PC-9 (cell line): ENCODE measurements at regions of chr14 and their contacts with region 1.

Region 1: DNA sequence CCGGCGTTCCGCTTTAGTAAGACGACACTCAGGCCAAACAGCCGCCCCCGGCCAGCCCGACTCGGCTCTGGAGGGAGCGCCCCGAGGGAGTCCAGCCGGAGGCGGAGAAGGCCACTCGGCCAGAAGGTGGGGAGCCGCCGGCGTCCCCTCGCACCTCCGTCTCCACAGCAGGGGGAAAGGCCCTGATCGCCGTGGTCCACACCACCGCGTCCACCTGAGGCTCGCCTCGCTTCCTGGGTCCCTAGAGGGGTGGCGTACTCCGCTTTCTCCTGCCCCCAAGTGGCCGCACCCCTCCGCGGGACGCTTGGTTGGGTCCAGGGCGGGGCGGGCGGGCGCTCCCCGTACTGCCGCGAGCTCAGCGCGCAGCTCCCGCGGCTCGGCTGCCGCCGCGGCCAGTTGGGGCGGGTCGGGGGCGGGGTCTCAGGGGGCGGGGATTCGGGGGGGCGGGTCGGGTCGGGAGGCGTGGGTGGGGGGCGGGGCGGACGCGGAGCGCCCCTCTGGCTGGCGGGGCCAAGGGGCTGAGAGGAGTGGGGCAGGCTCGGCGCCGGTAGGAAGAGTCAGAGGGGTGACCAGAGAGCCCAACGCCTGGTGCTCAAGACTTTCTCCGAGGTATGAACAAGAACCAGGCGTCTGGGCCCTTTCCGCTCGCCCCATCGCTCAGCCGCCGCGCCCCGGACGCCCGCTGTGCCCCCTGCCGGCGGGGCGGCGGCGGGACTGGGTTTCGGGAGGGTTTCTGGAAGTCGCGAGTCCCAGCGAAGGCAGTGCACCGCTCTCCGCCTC is at the start of gene FRMD6:
- DNase-seq: peak; percentile 70 to 86
- H3K4me3 ChIP-seq: peak within 1 kb of the TSS; percentile 98
- H3K27ac ChIP-seq: peak within 1 kb of the TSS; percentile 88
- H3K4me1 ChIP-seq: peaks cover 51% of the 10 kb centered on the region
- H3K27me3 ChIP-seq: no peaks in the 10 kb centered on the region
- CTCF ChIP-seq: peak; percentile 79
- total RNA-seq, gene FRMD6: 42.9 and 47.9 TPM in 2 replicates

Region 2: DNA sequence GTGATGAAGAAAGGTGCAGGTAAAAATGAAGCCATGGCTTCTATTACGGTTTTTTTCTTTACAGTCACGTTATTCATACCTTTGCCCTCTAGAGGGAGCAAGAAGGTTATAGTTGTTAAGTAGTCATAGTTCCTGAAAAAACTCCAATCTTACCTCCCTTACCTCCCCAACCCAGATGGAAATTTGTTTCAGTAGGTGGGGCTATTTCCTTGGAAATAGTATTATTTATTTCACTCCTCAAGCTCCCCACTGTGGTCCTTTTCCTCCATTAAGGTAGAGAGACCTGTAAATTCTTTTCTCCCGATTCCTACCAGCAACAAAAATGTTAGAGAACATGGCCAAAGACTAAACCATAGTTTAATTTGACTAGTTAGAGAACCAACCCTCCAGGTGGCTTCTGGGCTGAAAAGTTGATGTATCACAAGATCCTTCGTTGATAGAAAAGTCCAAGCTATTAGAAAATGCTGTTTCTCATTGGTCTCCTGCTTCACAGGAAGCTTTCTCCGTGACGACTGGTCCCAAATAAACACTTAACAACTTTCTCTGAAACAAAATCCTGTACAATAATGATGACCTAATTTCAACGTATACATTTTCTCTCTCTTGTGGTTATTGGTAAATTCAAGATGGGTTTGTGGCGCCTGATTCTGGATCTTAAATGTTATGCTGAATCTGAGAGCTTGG is 368.0 kb before region 1 on chr14:
- CTCF ChIA-PET with region 1: interaction called, 27 read pairs
- POLR2A ChIA-PET with region 1: interaction called, 3 read pairs
- intact Hi-C with region 1: loop called (anchors 1 kb)
- DNase-seq: peak; percentile 16 to 76
- H3K4me3 ChIP-seq: no peak overlapping the region
- H3K27ac ChIP-seq: no peak overlapping the region
- H3K4me1 ChIP-seq: no peaks in the 10 kb centered on the region
- H3K27me3 ChIP-seq: no peaks in the 10 kb centered on the region
- CTCF ChIP-seq: peak; percentile 91

Region 3: GRCh38 chr14:51442513-51443175 is 208.9 kb before region 1 on chr14:
- CTCF ChIA-PET with region 1: interaction called, 3 read pairs
- POLR2A ChIA-PET with region 1: interaction called, 5 read pairs
- intact Hi-C with region 1: loop called (anchors 2 kb)
- DNase-seq: peak; percentile 64 to 90
- H3K4me3 ChIP-seq: no peak overlapping the region; the same call in 1 of the 2 replicates
- H3K27ac ChIP-seq: peak overlapping the region; percentile 93
- H3K4me1 ChIP-seq: peaks cover 45% of the 10 kb centered on the region
- H3K27me3 ChIP-seq: no peaks in the 10 kb centered on the region
- CTCF ChIP-seq: no peak

Region 4: GRCh38 chr14:51521764-51522163 is 129.8 kb before region 1 on chr14:
- CTCF ChIA-PET with region 1: no interaction called
- POLR2A ChIA-PET with region 1: interaction called, 20 read pairs
- intact Hi-C with region 1: no loop called
- DNase-seq: no peak
- H3K4me3 ChIP-seq: no peak overlapping the region
- H3K27ac ChIP-seq: no peak overlapping the region
- H3K4me1 ChIP-seq: peaks cover 17% of the 10 kb centered on the region
- H3K27me3 ChIP-seq: no peaks in the 10 kb centered on the region
- CTCF ChIP-seq: no peak

Region 5: GRCh38 chr14:51554953-51555352 is 96.6 kb before region 1 on chr14:
- CTCF ChIA-PET with region 1: interaction called, 12 read pairs
- POLR2A ChIA-PET with region 1: interaction called, 10 read pairs
- intact Hi-C with region 1: loop called (anchors 2 kb)
- DNase-seq: no peak
- H3K4me3 ChIP-seq: no peak overlapping the region; the same call in 1 of the 2 replicates
- H3K27ac ChIP-seq: peak overlapping the region; percentile 70
- H3K4me1 ChIP-seq: peaks cover 30% of the 10 kb centered on the region
- H3K27me3 ChIP-seq: no peaks in the 10 kb centered on the region
- CTCF ChIP-seq: no peak; the same call in 1 of the 2 replicates

Region 6: DNA sequence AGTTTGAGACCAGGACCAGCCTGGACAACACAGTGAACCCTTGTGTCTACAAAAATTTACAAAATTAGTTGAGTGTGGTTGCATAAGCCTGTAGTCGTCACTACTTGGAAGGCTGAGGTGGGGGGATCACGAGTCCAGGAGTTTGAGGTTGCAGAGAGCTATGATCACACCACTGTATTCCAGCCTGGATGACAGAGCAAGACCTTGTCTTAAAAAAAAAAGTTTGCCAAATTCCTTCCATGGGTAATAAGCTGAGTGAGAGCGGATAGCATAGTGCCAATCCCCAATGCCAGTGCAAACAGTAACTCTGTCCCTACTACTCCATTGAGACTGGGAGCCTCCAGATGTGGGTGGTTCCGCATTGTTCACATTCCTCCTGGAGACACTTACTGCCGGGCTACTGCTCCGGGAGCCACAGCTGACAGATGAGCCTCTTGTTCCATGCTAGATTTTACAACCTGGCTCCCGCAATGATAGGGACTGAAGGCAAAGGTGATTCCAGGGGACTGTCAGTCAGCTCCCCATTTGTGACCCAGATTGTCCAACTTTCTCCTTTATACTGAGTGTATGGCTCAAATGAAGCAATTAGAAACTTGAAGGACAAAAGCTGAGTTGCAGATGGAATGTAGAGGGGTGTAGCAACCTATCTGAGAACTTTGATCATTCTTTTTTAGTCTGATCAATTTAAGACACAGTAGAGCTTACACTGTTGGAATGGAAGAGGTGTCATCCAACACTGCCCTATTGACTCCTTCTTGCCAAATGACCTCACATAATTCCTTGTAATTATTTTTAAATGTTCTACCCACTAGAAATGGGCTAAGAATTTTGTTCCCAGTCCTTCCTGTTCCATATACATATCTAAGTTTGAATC is 13.3 kb before region 1 on chr14:
- CTCF ChIA-PET with region 1: interaction called, 6 read pairs
- POLR2A ChIA-PET with region 1: interaction called, 33 read pairs
- intact Hi-C with region 1: no loop called
- DNase-seq: peak in 1 of 2 experiments; percentile 74
- H3K4me3 ChIP-seq: no peak overlapping the region
- H3K27ac ChIP-seq: no peak overlapping the region
- H3K4me1 ChIP-seq: peaks cover 15% of the 10 kb centered on the region
- H3K27me3 ChIP-seq: no peaks in the 10 kb centered on the region
- CTCF ChIP-seq: no peak

Region 7: DNA sequence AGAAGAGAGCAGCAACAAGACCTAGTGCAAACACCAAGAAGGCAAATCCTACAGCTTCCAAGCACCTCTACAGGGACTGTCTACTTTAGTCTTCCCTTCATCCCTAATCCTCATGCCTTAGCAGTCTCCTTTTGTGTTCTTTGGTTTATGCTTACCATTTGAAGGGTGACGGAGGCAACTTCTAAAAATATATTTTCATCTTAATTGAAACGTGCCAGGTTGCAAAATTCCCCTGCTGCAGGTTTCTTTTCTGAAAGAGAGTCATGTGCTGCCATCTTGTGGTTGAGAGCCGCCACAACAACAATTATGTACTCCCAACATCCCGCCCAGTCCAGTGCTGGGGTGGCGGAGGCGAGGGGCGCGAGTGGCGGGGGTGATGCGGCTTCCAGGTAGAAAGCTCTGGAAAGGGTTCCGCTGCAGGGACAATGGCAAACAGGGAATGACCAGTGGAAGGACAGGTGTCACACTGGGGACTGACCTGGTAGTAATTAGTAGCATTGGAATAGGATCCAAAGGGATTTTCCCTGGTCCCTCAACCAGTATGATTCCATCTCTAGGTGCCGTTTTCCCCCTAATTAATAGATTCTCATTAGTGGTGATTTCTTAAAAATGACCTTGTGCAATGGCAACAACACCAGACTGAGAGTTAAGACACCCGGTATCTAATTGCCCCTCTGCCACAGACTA is 128.6 kb after region 1 on chr14:
- CTCF ChIA-PET with region 1: interaction called, 11 read pairs
- POLR2A ChIA-PET with region 1: no interaction called
- intact Hi-C with region 1: loop called (anchors 1 kb)
- DNase-seq: peak in 1 of 2 experiments; percentile 69
- H3K4me3 ChIP-seq: no peak overlapping the region
- H3K27ac ChIP-seq: no peak overlapping the region
- H3K4me1 ChIP-seq: 0 out of 2 replicates have a peak, but pooled peaks cover 4% of the 10 kb centered on the region
- H3K27me3 ChIP-seq: no peaks in the 10 kb centered on the region
- CTCF ChIP-seq: peak; percentile 91